ENCODE measurements at regions of chr10 and their contacts with region 1.

Region 1: DNA sequence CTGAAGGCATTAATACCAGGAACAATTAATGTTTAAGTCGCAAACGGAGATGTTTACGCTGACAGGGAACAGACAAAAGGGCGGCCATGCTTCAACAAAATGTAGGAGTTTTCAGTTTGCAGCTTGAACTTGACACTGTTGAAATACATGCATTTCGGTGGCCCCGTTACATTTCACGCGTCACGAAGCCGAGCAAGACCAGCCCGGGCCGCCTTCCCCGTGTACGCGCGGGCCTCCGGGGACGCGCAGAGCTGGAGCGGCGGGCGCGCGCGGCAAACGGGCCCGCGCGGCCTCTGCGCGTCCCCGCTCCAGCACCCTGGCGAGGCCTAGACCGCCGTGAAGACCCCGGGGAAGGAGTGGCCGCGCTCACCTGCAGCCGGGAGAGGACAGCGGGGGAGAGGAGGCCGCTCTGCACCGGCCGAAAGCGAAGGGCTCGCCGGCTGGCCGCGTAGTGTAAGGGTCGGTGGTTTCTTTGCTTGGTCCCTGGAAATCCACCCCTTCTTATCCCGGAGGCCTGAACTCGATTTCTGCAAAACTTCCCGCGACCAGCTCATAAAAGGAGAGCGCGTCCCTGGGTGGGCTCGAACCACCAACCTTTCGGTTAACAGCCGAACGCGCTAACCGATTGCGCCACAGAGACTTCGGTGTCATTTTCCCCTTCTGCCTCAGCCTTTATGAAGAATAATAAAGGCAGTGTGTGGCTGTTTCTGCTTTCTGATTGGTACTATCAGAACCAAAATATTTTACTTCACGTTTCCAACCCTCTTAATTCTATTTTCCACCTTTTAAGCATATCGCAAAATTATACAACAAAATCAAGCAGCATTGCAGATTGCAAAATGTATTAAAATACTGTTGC is 11.4 kb upstream of the EBLN1 start:
- DNase-seq: peak; percentile 91
- ATAC-seq: peak; percentile 95
- H3K4me3 ChIP-seq: peak overlapping the region; percentile 74
- H3K27ac ChIP-seq: peak overlapping the region; percentile 53
- H3K4me1 ChIP-seq: no peaks in the 10 kb centered on the region
- H3K27me3 ChIP-seq: peaks cover 4% of the 10 kb centered on the region; the same call in 1 of the 2 replicates
- CTCF ChIP-seq: no peak
- POLR2A ChIP-seq: no peak
- RAD21 ChIP-seq: no peak

Region 2: DNA sequence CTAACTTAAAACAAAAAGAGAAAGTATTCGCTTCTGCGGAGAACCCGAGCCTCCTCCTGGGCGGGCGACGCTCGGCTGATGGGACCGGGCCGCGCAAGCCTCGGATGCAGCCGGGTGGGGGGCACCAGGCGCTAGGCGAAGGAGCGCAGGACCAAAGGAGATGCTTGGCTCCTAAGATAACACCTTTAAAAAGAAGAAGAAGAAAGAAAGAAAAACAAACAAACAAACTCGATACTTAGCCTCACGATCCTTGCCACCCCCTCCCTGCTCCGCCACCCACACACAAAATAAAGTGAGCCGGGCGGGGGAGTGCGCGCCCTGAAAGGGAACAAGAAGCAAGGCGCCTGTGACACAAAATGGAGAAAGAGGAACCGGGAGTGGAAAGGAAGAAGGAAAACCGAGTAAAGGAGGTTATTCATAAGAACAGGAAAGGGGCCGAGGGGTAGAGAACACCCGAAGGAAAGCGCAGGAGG is 22.6 kb after region 1 on chr10:
- CTCF ChIA-PET with region 1: no interaction called
- POLR2A ChIA-PET with region 1: no interaction called
- dilution Hi-C with region 1: no loop called
- in situ Hi-C with region 1: no loop called
- intact Hi-C with region 1: loop called (anchors 2 kb)
- DNase-seq: no peak
- ATAC-seq: peak; percentile 75
- H3K4me3 ChIP-seq: peak overlapping the region; percentile 49
- H3K27ac ChIP-seq: peak overlapping the region; percentile 16; the same call in 1 of the 2 replicates
- H3K4me1 ChIP-seq: no peaks in the 10 kb centered on the region
- H3K27me3 ChIP-seq: peaks cover 8% of the 10 kb centered on the region
- CTCF ChIP-seq: no peak
- POLR2A ChIP-seq: no peak
- RAD21 ChIP-seq: no peak

Region 3: DNA sequence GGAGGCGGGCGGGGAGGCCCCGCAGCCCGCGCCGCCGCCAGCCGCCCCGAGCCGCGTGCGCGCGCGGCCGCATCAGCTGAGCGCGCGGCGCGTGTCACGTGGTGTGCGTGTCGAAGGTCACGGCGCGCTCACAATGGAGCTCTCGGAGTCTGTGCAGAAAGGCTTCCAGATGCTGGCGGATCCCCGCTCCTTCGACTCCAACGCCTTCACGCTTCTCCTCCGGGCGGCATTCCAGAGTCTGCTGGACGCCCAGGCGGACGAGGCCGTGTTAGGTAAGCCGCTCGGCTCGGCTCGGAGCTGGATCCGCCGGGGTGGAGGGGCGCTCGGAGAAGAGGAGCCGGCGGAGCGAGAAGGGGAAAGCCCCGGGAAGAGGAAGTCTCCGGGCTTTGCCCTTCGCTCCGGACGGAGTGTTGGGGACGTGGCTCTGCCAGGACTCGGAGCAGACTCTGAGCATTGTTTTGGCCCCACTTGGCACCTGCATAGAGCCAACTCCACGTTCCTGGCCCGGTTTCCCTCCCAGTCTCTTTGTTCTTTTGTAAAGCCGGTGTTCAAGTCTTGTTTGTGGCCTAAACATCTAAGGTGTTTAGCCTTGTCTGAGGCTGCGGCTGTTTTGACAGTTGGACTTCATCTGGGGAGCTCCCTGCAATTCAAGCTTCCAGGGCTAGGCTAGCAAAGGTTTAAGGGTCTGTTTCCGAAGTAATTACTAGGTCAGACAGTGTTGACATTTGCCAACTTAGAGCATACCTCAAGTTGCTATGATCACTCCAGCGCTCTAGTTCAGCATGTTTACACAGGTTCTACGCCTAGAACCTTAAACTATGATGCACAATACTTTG is 87.3 kb after region 1 on chr10 and contains the start of gene COMMD3:
- CTCF ChIA-PET with region 1: no interaction called
- POLR2A ChIA-PET with region 1: no interaction called
- dilution Hi-C with region 1: no loop called
- in situ Hi-C with region 1: no loop called
- intact Hi-C with region 1: loop called (anchors 1 kb)
- DNase-seq: peak; percentile 86
- ATAC-seq: peak; percentile 74
- H3K4me3 ChIP-seq: peak within 1 kb of the TSS; percentile 76
- H3K27ac ChIP-seq: peak within 1 kb of the TSS; percentile 93
- H3K4me1 ChIP-seq: no peaks in the 10 kb centered on the region
- H3K27me3 ChIP-seq: peaks cover 2% of the 10 kb centered on the region; the same call in 1 of the 2 replicates
- CTCF ChIP-seq: no peak
- POLR2A ChIP-seq: no peak
- RAD21 ChIP-seq: no peak
- total RNA-seq, gene COMMD3: 33.1 and 44.8 TPM in 2 replicates

Region 4: DNA sequence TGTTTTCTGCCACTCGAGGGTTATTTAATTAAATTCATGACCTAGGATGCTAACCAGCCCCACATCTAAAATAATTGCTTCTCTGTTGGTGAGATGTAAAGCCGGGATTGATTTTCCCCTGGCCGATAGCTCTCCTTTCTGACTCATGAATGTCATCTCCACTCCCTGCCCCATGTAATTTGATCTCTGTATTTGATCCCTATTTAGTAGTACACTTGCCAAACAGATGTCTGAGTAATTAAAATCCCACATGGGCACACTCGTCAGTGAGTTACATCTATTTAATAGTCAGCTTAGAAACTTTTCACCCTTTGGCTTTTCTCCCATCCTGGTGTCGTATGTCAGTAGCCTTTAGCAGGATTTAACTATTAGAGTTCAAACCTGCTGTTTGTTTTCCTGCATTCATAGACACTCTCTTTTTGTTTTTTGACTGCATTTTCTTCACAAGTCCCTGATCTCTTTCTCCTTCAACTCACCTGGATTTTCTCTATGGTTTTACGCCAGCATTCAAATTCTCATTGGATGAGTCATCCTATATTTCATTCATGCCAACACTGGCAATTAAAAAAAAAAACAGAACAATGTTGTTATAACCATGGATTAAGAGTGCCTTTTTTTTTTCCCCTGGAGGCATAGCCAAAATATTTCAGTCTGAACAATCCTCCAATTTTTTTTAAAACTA is 198.9 kb after region 1 on chr10:
- CTCF ChIA-PET with region 1: no interaction called
- POLR2A ChIA-PET with region 1: no interaction called
- dilution Hi-C with region 1: no loop called
- in situ Hi-C with region 1: no loop called
- intact Hi-C with region 1: loop called (anchors 5 kb)
- DNase-seq: peak; percentile 90
- ATAC-seq: peak; percentile 67
- H3K4me3 ChIP-seq: no peak overlapping the region
- H3K27ac ChIP-seq: no peak overlapping the region
- H3K4me1 ChIP-seq: peaks cover 7% of the 10 kb centered on the region
- H3K27me3 ChIP-seq: no peaks in the 10 kb centered on the region; the same call in 1 of the 2 replicates
- CTCF ChIP-seq: no peak
- POLR2A ChIP-seq: no peak
- RAD21 ChIP-seq: no peak

Measured in IMR-90 (cell line).